ENCODE measurements at regions of chr1 and their contacts with region 1.

Region 1: GRCh38 chr1:150629115-150629928 is at the start of gene ENSA:
- DNase-seq: peak; percentile 94
- H3K4me3 Mint-ChIP-seq: no peak within 1 kb of the TSS
- H3K27ac Mint-ChIP-seq: no peak within 1 kb of the TSS
- H3K4me1 Mint-ChIP-seq: peaks cover 43% of the 10 kb centered on the region
- H3K27me3 Mint-ChIP-seq: peaks cover 1% of the 10 kb centered on the region
- total RNA-seq, gene ENSA: 282 and 285 TPM in 2 replicates

Region 2: GRCh38 chr1:150363426-150364230 is 265.7 kb before region 1 on chr1 and contains the start of gene RPRD2:
- intact Hi-C with region 1: loop called (anchors 5 kb)
- DNase-seq: peak; percentile 99
- H3K4me3 Mint-ChIP-seq: peak within 1 kb of the TSS; percentile 99
- H3K27ac Mint-ChIP-seq: peak within 1 kb of the TSS; percentile 97
- H3K4me1 Mint-ChIP-seq: peaks cover 41% of the 10 kb centered on the region
- H3K27me3 Mint-ChIP-seq: no peaks in the 10 kb centered on the region
- total RNA-seq, gene RPRD2: 24.4 and 24.7 TPM in 2 replicates

Region 3: GRCh38 chr1:150578965-150579798 is 50.1 kb before region 1 on chr1 and contains the start of gene MCL1:
- intact Hi-C with region 1: loop called (anchors 1 kb)
- DNase-seq: peak; percentile 92
- H3K4me3 Mint-ChIP-seq: peak within 1 kb of the TSS; percentile 95
- H3K27ac Mint-ChIP-seq: peak within 1 kb of the TSS; percentile 97
- H3K4me1 Mint-ChIP-seq: peaks cover 35% of the 10 kb centered on the region
- H3K27me3 Mint-ChIP-seq: peaks cover 2% of the 10 kb centered on the region
- total RNA-seq, gene MCL1: 311 and 317 TPM in 2 replicates

Region 4: DNA sequence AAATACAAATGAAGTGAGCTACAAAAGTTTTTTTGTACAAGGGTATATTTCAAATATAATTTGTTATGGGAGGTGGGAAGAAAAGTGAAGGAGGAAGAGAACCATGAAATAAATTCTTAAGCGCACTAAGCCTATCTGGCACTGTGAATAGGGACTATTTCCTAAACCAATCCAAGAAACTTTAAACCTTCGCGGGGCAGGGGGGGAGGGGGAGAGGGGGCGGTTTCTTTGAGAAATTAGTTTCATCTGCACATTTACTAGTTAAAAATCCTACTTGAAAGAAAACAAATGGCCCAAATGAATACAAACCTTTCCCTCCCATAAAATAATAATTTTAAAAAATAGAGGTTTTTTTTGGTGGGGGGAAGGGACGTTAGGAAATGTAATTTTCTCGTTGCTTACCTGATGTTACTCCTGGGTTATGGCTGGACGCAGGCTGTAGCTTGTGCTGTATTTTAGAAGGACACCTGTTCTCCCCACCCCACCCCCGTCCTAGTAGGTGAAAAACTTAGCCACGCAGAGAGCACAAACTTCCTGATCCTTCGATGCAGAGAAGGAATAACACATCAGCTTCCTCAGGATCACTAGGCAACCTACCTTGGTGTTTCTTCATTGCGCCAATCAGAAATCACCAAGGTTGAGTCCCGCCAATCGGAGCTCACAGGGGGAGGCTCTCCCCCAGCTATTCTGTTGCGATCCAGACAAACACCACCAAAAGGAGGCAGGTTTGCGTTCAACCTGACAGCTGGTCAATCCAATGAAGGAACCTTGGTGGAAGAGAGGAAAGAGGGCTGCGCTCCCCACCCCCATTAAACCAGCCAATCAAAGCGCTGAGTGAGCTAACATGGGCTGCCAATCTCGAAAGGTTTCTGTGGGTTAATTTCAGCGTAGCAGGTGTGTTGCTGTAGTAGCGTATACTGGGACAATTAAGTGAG is 67.5 kb after region 1 on chr1 and contains the start of gene GOLPH3L:
- intact Hi-C with region 1: loop called (anchors 1 kb)
- DNase-seq: peak; percentile 89
- H3K4me3 Mint-ChIP-seq: peak within 1 kb of the TSS; percentile 91
- H3K27ac Mint-ChIP-seq: peak within 1 kb of the TSS; percentile 85
- H3K4me1 Mint-ChIP-seq: peaks cover 33% of the 10 kb centered on the region
- H3K27me3 Mint-ChIP-seq: peaks cover 12% of the 10 kb centered on the region
- total RNA-seq, gene GOLPH3L: 19.1 and 20.5 TPM in 2 replicates

Region 5: DNA sequence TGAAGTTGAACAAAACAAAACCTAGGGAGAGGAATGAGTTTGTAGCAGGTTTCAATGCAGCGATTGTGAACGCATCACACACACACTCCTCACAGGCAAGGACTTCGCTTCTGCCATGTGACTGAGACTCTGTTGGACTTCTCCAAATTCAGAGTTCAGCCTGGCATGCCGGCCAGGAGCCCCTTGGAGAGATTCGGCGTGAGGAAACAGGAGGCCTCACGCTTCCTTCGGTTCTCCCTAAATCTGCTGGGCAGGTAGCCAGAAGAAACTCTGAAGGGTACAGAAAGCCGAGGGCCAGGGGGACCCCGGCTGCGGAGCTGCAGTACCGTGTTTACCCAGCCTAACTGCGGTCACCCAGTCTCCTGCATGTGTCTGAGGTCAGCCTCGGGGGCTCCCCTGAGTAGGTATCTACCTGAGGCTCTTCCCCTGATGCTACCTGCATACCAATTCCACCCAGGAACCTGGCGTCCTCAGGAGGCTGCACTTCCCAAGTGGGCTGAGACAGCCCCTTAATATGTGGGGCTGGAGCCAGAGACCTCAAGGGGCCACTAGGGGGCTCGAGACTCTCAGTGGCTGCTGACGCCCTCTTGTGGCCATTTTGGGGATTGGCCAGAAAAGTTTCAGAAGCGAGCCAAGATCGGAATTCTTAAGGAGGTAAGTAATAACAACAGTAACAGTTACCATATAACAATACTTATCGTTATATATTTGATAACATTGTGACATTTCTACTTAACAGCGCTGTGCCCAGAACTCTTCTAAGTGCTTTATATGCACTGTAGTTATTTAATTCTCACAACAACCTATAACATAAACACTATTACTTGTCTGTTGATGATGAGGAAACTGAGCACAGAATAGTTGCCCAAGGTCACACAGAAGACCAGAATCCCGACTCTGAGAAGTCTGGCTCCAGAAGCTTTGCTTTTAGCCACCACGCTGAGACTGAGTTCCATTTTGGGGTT is 350.1 kb after region 1 on chr1:
- intact Hi-C with region 1: loop called (anchors 5 kb)
- DNase-seq: peak; percentile 80
- H3K4me3 Mint-ChIP-seq: no peak overlapping the region
- H3K27ac Mint-ChIP-seq: no peak overlapping the region
- H3K4me1 Mint-ChIP-seq: peaks cover 32% of the 10 kb centered on the region
- H3K27me3 Mint-ChIP-seq: no peaks in the 10 kb centered on the region

Region 6: GRCh38 chr1:151156515-151156819 is 527.1 kb after region 1 on chr1 and contains the start of gene TNFAIP8L2:
- intact Hi-C with region 1: loop called (anchors 2 kb)
- DNase-seq: peak; percentile 72
- H3K4me3 Mint-ChIP-seq: peak within 1 kb of the TSS; percentile 92
- H3K27ac Mint-ChIP-seq: peak within 1 kb of the TSS; percentile 99
- H3K4me1 Mint-ChIP-seq: peaks cover 42% of the 10 kb centered on the region
- H3K27me3 Mint-ChIP-seq: no peaks in the 10 kb centered on the region
- total RNA-seq, gene TNFAIP8L2: 38.0 and 38.5 TPM in 2 replicates